CD4-positive, alpha-beta memory T cell (primary cell): ENCODE measurements at regions of chr5 and their contacts with region 1.

Region 1: GRCh38 chr5:611721-612486 is at the start of gene CEP72:
- DNase-seq: peak; percentile 88 to 91 (median 88)
- H3K4me3 ChIP-seq: peak within 1 kb of the TSS; percentile 25 to 67
- H3K4me3 Mint-ChIP-seq: peak within 1 kb of the TSS; percentile 92 to 99 (median 94)
- H3K27ac ChIP-seq: peak within 1 kb of the TSS; percentile 52
- H3K27ac Mint-ChIP-seq: peak within 1 kb of the TSS; percentile 76 to 92 (median 86)
- H3K4me1 ChIP-seq: peaks cover 21% of the 10 kb centered on the region
- H3K4me1 Mint-ChIP-seq: peaks cover 24 to 44% (median 34%) of the 10 kb centered on the region in 4 donors
- H3K27me3 ChIP-seq: no peaks in the 10 kb centered on the region
- H3K27me3 Mint-ChIP-seq: peaks cover 6 to 16% of the 10 kb centered on the region in 2 donors
- total RNA-seq, gene CEP72: 26.7 to 28.0 TPM

Region 2: GRCh38 chr5:270340-270739 is 341.6 kb before region 1 on chr5:
- CTCF ChIA-PET with region 1: no interaction called
- POLR2A ChIA-PET with region 1: no interaction called
- intact Hi-C with region 1: loop called (anchors 5 kb)
- DNase-seq: no peak
- H3K4me3 ChIP-seq: no peak overlapping the region
- H3K4me3 Mint-ChIP-seq: peak overlapping the region; percentile 65 to 97 (median 85)
- H3K27ac ChIP-seq: no peak overlapping the region
- H3K27ac Mint-ChIP-seq: peak overlapping the region; percentile 65 to 91 (median 83)
- H3K4me1 ChIP-seq: peaks cover 35% of the 10 kb centered on the region
- H3K4me1 Mint-ChIP-seq: peaks cover 17 to 45% (median 36%) of the 10 kb centered on the region in 4 donors
- H3K27me3 ChIP-seq: no peaks in the 10 kb centered on the region
- H3K27me3 Mint-ChIP-seq: no peaks in the 10 kb centered on the region

Region 3: DNA sequence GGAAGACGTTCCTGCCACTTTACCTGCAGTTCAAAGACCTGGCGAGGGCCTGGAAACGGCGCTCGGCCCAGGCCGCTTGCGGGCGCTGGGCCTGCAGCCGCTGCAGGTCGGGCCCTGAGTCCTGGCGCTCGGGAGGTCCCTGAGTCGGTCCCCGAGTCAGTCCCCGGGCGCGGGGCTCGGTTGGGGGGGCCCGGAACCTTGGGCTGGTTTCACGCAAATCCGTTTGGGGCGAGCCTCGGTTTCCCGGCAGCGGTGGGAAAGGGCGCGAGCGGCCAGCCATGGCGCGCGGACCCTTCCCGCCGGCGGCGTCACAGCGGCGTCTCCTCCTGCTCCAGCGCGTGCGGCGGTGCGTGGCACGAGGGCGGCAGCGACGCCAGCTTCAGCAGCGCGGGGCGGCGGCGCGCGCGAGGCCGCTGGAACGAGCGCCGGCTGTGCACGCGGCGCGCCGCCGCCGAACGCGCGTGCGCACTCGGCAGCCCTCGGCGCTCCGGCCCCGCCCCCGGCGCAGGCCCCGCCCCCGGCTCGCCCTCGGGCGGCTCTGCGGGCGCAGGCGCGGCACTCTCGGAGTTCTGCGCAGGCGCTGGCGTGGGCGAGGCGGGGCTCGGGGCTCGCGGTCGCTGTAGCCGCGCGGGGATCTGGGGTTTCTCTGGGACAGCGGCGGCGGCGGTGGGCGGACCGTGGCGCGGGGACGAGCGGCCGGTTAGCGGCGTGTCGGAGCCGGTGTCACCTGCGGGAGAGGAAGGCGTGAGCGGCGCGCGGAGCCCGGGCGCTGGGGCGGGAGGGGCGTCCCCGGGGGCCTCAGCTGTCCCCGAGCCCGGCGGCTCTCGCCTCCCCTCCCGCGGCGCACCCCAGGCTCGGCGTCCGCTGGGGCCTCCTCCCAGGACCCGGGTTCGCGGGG is 139.0 kb before region 1 on chr5:
- CTCF ChIA-PET with region 1: no interaction called
- POLR2A ChIA-PET with region 1: interaction called, 3 read pairs
- intact Hi-C with region 1: loop called (anchors 1 kb)
- DNase-seq: peak; percentile 83 to 95 (median 91)
- H3K4me3 ChIP-seq: peak overlapping the region; percentile 50 to 63
- H3K4me3 Mint-ChIP-seq: peak overlapping the region; percentile 76 to 85 (median 82)
- H3K27ac ChIP-seq: peak overlapping the region; percentile 80
- H3K27ac Mint-ChIP-seq: peak overlapping the region in 5 of 7 donors; percentile 9 to 89 (median 77)
- H3K4me1 ChIP-seq: peaks cover 30% of the 10 kb centered on the region
- H3K4me1 Mint-ChIP-seq: peaks cover 6 to 20% (median 15%) of the 10 kb centered on the region in 4 donors
- H3K27me3 ChIP-seq: no peaks in the 10 kb centered on the region
- H3K27me3 Mint-ChIP-seq: peaks cover 1 to 7% of the 10 kb centered on the region in 2 donors

Region 4: DNA sequence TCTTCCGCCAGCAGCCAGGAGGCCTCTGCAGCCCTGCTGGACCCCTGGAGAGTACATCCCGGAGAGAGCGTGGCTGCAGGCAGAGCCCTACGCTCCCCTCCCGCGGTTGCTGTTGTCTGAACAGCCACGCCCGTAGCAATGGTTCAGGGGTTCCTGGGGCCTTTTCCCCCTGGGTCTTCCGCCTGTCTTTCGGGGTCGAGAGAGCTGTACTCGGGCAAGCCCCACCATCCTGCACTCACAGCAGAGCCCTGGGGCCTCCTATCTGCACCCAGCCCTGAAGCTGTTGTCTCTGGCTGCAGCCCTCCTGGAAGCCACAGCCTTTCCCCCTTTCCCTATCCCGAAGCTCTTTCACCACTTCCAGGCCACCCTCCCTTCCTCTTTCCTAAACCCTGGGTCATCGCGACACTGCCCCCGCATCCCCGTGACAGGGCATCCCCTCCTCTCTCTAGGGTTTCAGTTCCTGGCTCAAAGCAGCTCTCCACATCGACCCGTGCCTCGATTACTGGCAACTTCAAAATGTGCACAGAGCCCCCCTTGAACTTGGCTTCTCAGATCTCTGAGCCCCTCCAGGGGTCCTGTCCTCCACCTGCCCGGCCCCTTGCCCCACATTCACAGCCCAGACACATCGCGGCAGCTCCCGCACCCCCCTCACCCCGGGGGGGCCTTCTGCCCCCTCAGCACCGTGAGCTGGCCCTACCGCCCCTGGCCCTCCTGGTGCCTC is 43.7 kb before region 1 on chr5:
- CTCF ChIA-PET with region 1: no interaction called
- POLR2A ChIA-PET with region 1: no interaction called
- intact Hi-C with region 1: no loop called
- DNase-seq: no peak
- H3K4me3 ChIP-seq: no peak overlapping the region
- H3K4me3 Mint-ChIP-seq: no peak overlapping the region
- H3K27ac ChIP-seq: no peak overlapping the region
- H3K27ac Mint-ChIP-seq: peak overlapping the region in 1 of 7 donors; percentile 61
- H3K4me1 ChIP-seq: no peaks in the 10 kb centered on the region
- H3K4me1 Mint-ChIP-seq: no peaks in the 10 kb centered on the region
- H3K27me3 ChIP-seq: no peaks in the 10 kb centered on the region
- H3K27me3 Mint-ChIP-seq: peaks cover 11 to 17% of the 10 kb centered on the region in 2 donors

Region 5: DNA sequence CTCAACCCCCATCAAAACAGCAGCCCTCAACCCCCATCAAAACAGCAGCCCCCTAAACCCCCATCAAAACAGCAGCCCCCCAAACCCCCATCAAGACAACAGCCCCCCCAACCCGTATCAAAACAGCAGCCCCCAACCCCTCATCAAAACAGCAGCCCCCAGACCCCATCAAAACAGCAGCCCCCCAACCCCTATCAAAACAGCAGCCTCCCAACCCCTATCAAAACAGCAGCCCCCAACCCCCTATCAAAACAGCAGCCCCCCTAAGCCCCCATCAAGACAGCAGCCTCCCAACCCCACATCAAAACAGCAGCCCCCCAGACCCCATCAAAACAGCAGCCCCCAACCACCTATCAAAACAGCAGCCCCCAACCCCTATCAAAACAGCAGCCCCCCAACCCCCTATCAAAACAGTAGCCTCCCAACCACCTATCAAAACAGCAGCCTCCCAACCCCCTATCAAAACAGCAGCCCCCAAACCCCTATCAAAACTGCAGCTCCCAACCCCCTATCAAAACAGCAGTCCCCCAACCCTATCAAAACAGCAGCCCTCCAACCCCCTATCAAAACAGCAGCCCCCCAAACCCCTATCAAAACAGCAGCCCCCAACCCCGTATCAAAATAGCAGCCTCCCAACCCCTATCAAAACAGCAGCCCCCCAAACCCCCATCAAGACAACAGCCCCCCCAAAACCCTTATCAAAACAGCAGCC is 80.1 kb after region 1 on chr5:
- CTCF ChIA-PET with region 1: no interaction called
- POLR2A ChIA-PET with region 1: no interaction called
- intact Hi-C with region 1: loop called (anchors 2 kb)
- DNase-seq: peak in 1 of 5 donors; percentile 11
- H3K4me3 ChIP-seq: peak overlapping the region in 1 of 2 donors; percentile 35
- H3K4me3 Mint-ChIP-seq: peak overlapping the region; percentile 41 to 82 (median 81)
- H3K27ac ChIP-seq: no peak overlapping the region
- H3K27ac Mint-ChIP-seq: peak overlapping the region in 4 of 7 donors; percentile 27 to 86 (median 55)
- H3K4me1 ChIP-seq: peaks cover 5% of the 10 kb centered on the region
- H3K4me1 Mint-ChIP-seq: peaks cover 0 to 5% (median 0%) of the 10 kb centered on the region in 4 donors
- H3K27me3 ChIP-seq: no peaks in the 10 kb centered on the region
- H3K27me3 Mint-ChIP-seq: peaks cover 0 to 1% of the 10 kb centered on the region in 2 donors

Region 6: DNA sequence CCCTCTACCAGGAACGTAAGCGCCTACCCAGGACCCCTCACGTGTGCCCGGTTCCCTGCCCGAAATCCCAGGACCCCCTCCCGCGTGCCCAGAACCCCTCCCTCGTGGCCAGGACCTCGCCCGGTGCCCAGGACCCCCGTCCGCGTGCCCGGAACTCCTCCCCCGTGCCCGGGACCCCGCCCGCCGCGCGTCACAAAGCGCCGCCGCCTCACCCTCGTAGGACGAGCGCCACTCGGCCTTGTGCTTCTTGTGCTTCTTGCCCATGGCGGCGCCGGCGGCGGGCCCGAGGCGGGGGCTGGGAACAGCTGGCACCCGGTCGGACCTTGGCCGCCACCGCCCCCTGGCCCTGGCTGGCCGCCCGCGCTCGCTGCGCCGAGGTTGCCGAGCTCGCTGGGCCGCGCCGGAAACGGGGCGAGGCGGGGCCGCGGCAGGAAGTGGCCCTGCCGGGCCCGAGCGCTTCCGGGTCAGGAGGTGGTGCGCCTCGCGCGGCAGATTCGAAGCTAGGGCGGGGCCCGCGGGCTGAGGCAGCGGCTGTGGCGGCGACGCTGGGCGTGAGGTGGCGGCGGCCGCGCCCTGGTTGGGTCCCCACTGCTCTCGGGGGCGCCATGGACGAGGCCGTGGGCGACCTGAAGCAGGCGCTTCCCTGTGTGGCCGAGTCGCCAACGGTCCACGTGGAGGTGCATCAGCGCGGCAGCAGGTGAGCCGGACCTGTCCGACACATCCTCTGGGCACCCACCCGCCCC is 280.7 kb after region 1 on chr5 and contains the starts of genes BRD9 and TRIP13:
- CTCF ChIA-PET with region 1: no interaction called
- POLR2A ChIA-PET with region 1: no interaction called
- intact Hi-C with region 1: loop called (anchors 5 kb)
- DNase-seq: peak; percentile 81 to 89 (median 88)
- H3K4me3 ChIP-seq: peak within 1 kb of the TSS; percentile 38 to 83
- H3K4me3 Mint-ChIP-seq: peak within 1 kb of the TSS; percentile 85 to 90 (median 87)
- H3K27ac ChIP-seq: peak within 1 kb of the TSS; percentile 90
- H3K27ac Mint-ChIP-seq: peak within 1 kb of the TSS; percentile 86 to 95 (median 91)
- H3K4me1 ChIP-seq: peaks cover 28% of the 10 kb centered on the region
- H3K4me1 Mint-ChIP-seq: peaks cover 7 to 40% (median 23%) of the 10 kb centered on the region in 4 donors
- H3K27me3 ChIP-seq: no peaks in the 10 kb centered on the region
- H3K27me3 Mint-ChIP-seq: no peaks in the 10 kb centered on the region
- total RNA-seq, gene BRD9: 81.5 to 86.8 TPM
- total RNA-seq, gene TRIP13: 0.69 to 1.0 TPM

Region 7: DNA sequence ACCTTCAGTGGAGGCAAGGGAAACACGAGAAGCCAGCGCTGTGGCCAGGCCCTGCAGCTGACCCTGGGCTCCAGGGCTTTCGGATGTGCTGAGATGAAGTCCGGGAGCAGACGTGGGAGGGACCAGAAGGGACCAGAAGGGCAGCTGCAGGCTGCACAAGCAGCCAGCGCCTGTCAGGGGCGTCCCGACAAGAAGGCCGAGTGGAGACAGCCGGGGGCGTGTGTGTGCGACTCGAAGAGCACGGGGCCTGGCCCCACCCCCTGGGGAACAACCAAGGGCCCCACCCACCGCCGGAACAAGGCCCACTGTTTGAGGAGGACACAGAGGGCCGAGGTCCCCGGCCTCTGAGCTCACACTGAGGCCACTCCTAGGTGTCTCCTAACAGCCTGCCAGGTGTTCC is 468.5 kb after region 1 on chr5:
- CTCF ChIA-PET with region 1: no interaction called
- POLR2A ChIA-PET with region 1: no interaction called
- intact Hi-C with region 1: no loop called
- DNase-seq: no peak
- H3K4me3 ChIP-seq: no peak overlapping the region
- H3K4me3 Mint-ChIP-seq: no peak overlapping the region
- H3K27ac ChIP-seq: no peak overlapping the region
- H3K27ac Mint-ChIP-seq: peak overlapping the region in 1 of 7 donors; percentile 68
- H3K4me1 ChIP-seq: no peaks in the 10 kb centered on the region
- H3K4me1 Mint-ChIP-seq: peaks cover 0 to 2% (median 0%) of the 10 kb centered on the region in 4 donors
- H3K27me3 ChIP-seq: no peaks in the 10 kb centered on the region
- H3K27me3 Mint-ChIP-seq: no peaks in the 10 kb centered on the region